H1 (cell line): ENCODE measurements at regions of chr1 and their contacts with region 1.

Region 1: DNA sequence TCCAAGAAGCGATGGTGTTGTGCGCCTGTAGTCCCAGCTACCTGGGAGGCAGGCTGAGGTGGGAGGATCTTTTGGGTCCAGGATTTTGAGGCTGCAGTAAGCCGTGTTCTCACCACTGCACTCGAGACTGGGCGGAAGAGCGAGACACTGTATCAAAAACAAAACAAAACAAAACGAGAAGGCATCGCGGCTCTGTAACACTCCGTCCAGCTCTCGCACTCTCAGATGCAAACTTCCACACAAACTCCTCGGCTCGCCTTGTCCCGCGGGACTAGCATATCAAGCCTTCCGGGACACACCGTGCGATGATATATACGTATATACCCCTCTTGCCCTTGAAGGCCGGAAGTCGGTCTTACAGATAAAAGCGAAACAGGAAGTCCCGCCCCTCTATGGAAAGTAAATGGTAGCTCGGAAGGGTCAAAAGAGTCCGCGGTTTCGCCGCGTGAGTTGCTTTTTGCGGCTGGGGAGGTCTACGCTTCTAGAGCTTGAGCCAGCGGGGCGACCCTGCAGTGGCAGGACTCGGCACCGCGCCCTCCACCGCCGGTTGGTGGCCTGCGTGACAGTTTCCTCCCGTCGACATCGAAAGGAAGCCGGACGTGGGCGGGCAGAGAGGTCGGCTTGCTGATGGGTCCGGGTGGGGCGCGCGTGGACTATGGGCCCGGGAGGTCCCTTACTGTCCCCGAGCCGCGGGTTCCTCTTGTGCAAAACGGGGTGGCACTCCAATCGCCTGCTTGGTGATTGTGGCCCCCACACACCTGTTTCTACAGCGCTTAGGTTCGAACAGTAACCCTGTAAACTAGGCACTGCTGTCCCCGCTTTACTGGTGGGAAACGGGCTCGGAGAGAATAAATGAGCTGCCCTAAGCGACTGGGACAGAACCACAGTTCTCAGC is at the start of gene COA6:
- DNase-seq: peak; percentile 75 to 85
- H3K4me3 ChIP-seq: peak within 1 kb of the TSS; percentile 77 to 96 (median 94)
- H3K27ac ChIP-seq: peak within 1 kb of the TSS; percentile 85
- H3K4me1 ChIP-seq: peaks cover 0 to 4% (median 1%) of the 10 kb centered on the region in 4 experiments; a peak in 3 of 7 replicates
- H3K27me3 ChIP-seq: no peaks in the 10 kb centered on the region; a peak in 1 of 7 replicates
- CTCF ChIP-seq: no peak
- EP300 ChIP-seq: no peak
- POLR2A ChIP-seq: peak in 1 of 2 experiments; percentile 90; a peak in 2 of 3 replicates
- RAD21 ChIP-seq: no peak
- total RNA-seq, gene COA6: 40.4 and 44.9 TPM in 2 replicates

Region 2: DNA sequence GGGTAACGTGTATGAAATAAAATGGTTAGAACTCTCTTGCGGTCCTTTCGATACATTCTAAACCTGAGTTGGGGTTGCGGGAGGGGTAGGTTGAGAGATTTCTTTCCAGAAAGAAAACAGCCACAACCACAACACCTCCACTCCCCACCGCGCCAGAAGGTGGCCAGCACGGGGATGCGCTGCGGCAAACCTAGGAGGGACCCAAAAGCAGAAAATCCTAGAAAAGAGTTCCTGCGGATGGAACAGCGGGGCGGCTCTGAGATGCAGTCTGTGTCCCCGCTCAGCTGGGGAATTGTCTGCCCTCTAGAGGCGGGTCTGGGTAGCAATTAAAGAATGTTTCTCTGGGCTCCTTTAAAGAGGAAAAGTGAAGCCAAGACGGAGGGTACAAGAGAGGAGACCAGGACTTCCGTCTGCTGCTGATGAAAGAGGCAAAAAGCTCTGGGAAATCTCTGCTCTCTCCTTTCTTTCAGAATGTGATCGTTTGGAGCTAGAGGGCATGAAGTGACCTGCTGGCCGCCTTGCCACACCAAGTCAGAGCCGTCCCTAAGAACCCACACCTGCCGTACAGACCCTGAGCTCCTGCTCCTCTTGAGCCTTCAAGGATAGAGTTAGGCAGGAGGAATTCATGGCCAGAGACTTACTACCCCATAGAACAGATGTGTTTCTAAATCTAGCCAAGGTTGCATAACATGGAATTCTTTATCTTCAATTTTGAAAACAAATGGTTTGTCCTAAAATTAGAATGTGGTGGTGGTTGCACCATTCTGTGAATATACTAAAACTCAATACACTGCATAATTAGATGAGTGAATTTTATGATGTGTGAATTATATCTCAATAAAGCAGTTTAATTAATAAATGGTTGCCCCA is 46.6 kb before region 1 on chr1:
- CTCF ChIA-PET with region 1: interaction called, 15 read pairs
- POLR2A ChIA-PET with region 1: no interaction called
- DNase-seq: peak; percentile 41 to 88
- H3K4me3 ChIP-seq: peak overlapping the region in 1 of 4 experiments; percentile 50; a peak in 1 of 8 replicates
- H3K27ac ChIP-seq: no peak overlapping the region
- H3K4me1 ChIP-seq: peaks cover 0 to 3% (median under 1%) of the 10 kb centered on the region in 4 experiments; a peak in 1 of 7 replicates
- H3K27me3 ChIP-seq: no peaks in the 10 kb centered on the region
- CTCF ChIP-seq: peak; percentile 73 to 85 (median 77)
- EP300 ChIP-seq: no peak
- POLR2A ChIP-seq: no peak
- RAD21 ChIP-seq: peak; percentile 57 to 67

Region 3: DNA sequence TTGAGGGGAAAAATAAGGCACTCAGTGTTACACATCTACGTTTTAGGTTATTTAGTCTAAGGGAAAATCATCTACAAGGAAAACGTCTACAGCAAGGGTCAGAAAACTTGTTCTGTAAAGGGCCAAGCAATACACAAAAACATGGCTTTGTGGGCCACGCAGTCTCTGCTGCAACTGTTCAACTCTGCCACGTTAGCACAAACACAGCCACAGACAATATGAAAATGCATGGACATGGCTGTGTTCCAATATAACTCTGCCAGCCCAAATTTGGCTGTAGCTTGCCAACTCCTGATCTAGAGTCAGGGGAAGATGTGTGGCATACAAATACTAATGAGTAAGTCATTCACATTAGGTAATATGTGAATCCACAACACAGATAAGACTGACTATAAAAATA is 40.7 kb after region 1 on chr1:
- CTCF ChIA-PET with region 1: no interaction called
- POLR2A ChIA-PET with region 1: no interaction called
- DNase-seq: no peak
- H3K4me3 ChIP-seq: no peak overlapping the region
- H3K27ac ChIP-seq: no peak overlapping the region
- H3K4me1 ChIP-seq: no peaks in the 10 kb centered on the region
- H3K27me3 ChIP-seq: no peaks in the 10 kb centered on the region
- CTCF ChIP-seq: no peak
- EP300 ChIP-seq: no peak
- POLR2A ChIP-seq: no peak
- RAD21 ChIP-seq: no peak